ENCODE measurements at regions of chr3 and their contacts with region 1.

Region 1: GRCh38 chr3:52742418-52743041 is 28.2 kb downstream of the NEK4 start:
- DNase-seq: peak in 2 of 35 experiments; percentile 6 to 58
- ATAC-seq: no peak
- H3K4me3 ChIP-seq: no peak overlapping the region
- H3K4me3 Mint-ChIP-seq: no peak overlapping the region
- H3K27ac ChIP-seq: no peak overlapping the region
- H3K27ac Mint-ChIP-seq: no peak overlapping the region
- H3K4me1 ChIP-seq: no peaks in the 10 kb centered on the region
- H3K4me1 Mint-ChIP-seq: no peaks in the 10 kb centered on the region
- H3K27me3 ChIP-seq: no peaks in the 10 kb centered on the region
- H3K27me3 Mint-ChIP-seq: no peaks in the 10 kb centered on the region

Region 2: GRCh38 chr3:52934630-52935530 is 192.3 kb after region 1 on chr3:
- CTCF ChIA-PET with region 1: interaction called in 1 of 2 experiments, 12 read pairs
- POLR2A ChIA-PET with region 1: no interaction called
- DNase-seq: peak; percentile 13 to 74 (median 37)
- ATAC-seq: peak; percentile 93 to 98 (median 96)
- H3K4me3 ChIP-seq: no peak overlapping the region
- H3K4me3 Mint-ChIP-seq: no peak overlapping the region
- H3K27ac ChIP-seq: no peak overlapping the region
- H3K27ac Mint-ChIP-seq: peak overlapping the region; percentile 23 to 63
- H3K4me1 ChIP-seq: no peaks in the 10 kb centered on the region
- H3K4me1 Mint-ChIP-seq: peaks cover 9 to 18% (median 17%) of the 10 kb centered on the region in 3 donors
- H3K27me3 ChIP-seq: no peaks in the 10 kb centered on the region
- H3K27me3 Mint-ChIP-seq: no peaks in the 10 kb centered on the region

Measured in T-cell (primary cell).